ENCODE measurements at regions of chr21 and their contacts with region 1.

Region 1: GRCh38 chr21:24658016-24658415 is 949.3 kb downstream of the MRPL39 start:
- DNase-seq: no peak
- ATAC-seq: no peak
- H3K4me3 ChIP-seq: no peak overlapping the region
- H3K27ac ChIP-seq: no peak overlapping the region
- H3K4me1 ChIP-seq: no peaks in the 10 kb centered on the region
- H3K27me3 ChIP-seq: no peaks in the 10 kb centered on the region
- CTCF ChIP-seq: no peak

Region 2: DNA sequence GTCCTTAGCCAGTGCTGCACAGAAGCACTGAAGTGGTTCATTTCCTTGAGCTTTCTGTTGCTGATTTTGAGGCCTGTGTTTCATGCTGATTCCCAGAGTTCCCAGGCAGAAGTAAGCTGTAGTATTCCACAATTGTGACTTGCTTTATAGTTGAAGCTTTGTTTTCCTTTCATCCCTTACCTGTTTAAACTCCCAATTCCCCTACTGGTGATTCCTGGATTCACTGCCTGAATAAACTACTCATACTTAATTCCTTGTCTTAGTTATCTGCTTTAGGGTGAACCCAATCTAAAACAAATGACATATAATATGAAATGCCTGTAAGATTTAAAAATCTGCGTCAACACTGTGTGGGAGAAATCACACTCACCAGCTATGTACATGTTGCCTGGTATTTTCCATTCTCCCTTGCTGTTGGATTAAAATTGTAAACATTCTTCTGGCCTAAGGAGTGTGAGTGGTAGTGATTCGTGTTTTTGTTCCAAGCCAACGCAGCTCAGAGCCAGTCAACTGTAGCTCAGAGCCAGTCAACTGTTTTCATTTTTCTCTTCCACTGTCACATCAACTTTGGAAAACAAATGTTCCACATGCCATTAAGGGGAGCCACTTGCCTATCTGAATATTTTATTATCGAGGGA is 69.9 kb after region 1 on chr21:
- intact Hi-C with region 1: loop called in 1 of 10 experiments (anchors 10 kb)
- DNase-seq: no peak
- ATAC-seq: no peak
- H3K4me3 ChIP-seq: no peak overlapping the region
- H3K27ac ChIP-seq: no peak overlapping the region
- H3K4me1 ChIP-seq: no peaks in the 10 kb centered on the region
- H3K27me3 ChIP-seq: no peaks in the 10 kb centered on the region
- CTCF ChIP-seq: no peak

Region 3: DNA sequence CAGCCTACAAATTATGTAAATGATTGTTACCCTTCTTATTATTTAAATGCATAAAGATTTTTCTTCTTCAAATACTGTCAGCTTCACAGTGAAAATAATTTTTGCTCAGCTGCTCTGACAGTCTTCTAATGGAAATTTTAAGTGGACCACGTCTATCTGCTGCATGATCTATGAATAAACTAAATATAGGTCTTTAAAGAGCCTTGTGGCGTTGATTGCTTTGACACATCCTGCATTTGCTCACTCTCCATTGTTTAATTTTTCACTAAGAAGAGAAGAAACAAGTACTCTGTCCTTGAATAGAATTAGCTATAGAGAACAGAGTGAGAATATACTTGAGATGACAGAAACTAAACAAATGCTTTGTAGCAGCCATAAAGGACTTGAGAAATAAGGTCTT is 123.1 kb after region 1 on chr21:
- intact Hi-C with region 1: no loop called
- DNase-seq: no peak
- ATAC-seq: no peak
- H3K4me3 ChIP-seq: no peak overlapping the region
- H3K27ac ChIP-seq: no peak overlapping the region
- H3K4me1 ChIP-seq: no peaks in the 10 kb centered on the region
- H3K27me3 ChIP-seq: no peaks in the 10 kb centered on the region
- CTCF ChIP-seq: no peak